Activated T-helper 1 cell treated with anti-CD3 and anti-CD28 coated beads, Interleukin-12 subunit alpha, Interleukin-12 subunit beta, Interleukin-2, Interleukin-4 antibody, amounts not matched to agents 30 ng/mL and 10 ng/mL and 1 ng/mL, durations not matched to agents 14 hours and 24 hours and 36 hours (primary cell): ENCODE measurements at regions of chr10 and their contacts with region 1.

Region 1: DNA sequence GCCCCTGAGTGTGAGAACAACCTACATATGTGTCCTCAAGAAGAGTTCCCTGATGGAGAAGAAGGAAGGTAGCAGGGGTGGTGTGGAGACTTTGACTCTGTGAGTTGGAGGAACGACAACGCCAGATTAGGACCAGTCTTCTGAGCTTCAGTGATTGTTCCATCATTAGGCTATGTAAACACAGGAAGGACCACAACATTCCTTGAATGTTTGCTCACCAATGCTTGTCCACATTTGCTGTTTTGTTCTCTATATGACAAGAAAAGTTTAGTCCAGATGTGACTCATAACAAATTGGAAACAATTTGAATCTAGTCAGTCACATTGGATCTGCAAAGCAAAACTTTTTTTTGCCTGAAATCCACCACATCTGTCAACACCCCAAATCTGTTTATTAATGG is 62.7 kb downstream of the ENTPD1 start:
- DNase-seq: no peak
- H3K4me3 Mint-ChIP-seq: no peak overlapping the region
- H3K27ac Mint-ChIP-seq: peak overlapping the region; percentile 76
- H3K4me1 Mint-ChIP-seq: peaks cover 73% of the 10 kb centered on the region
- H3K27me3 Mint-ChIP-seq: no peaks in the 10 kb centered on the region

Region 2: DNA sequence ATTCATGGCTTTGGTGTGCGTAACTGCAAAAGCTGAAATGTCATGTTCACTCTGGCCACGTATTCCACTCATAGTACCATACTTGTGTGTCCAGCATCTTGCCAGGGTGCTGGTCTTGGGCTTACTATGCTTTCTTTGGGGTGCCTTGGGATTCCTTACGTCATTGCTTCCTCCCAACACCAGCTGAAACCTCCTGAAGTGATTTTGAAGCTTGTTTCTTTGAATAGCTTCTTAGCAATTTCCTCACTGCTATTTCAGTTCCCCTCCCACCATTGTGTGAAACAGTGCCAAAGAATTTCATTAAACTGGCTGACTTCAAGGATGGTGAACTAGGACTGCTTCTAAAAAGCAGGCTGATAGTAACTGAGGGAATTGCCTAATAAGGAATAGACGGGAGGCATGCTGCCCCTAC is 25.8 kb before region 1 on chr10:
- intact Hi-C with region 1: loop called (anchors 2 kb)
- DNase-seq: no peak
- H3K4me3 Mint-ChIP-seq: no peak overlapping the region
- H3K27ac Mint-ChIP-seq: peak overlapping the region; percentile 95
- H3K4me1 Mint-ChIP-seq: peaks cover 88% of the 10 kb centered on the region
- H3K27me3 Mint-ChIP-seq: peaks cover under 1% of the 10 kb centered on the region

Region 3: GRCh38 chr10:95889830-95890229 is 71.2 kb after region 1 on chr10:
- intact Hi-C with region 1: no loop called
- DNase-seq: no peak
- H3K4me3 Mint-ChIP-seq: no peak overlapping the region
- H3K27ac Mint-ChIP-seq: no peak overlapping the region
- H3K4me1 Mint-ChIP-seq: peaks cover 5% of the 10 kb centered on the region
- H3K27me3 Mint-ChIP-seq: no peaks in the 10 kb centered on the region